Colonic mucosa (tissue), 4 donors: ENCODE measurements at regions of chr3 and their contacts with region 1.

Region 1: DNA sequence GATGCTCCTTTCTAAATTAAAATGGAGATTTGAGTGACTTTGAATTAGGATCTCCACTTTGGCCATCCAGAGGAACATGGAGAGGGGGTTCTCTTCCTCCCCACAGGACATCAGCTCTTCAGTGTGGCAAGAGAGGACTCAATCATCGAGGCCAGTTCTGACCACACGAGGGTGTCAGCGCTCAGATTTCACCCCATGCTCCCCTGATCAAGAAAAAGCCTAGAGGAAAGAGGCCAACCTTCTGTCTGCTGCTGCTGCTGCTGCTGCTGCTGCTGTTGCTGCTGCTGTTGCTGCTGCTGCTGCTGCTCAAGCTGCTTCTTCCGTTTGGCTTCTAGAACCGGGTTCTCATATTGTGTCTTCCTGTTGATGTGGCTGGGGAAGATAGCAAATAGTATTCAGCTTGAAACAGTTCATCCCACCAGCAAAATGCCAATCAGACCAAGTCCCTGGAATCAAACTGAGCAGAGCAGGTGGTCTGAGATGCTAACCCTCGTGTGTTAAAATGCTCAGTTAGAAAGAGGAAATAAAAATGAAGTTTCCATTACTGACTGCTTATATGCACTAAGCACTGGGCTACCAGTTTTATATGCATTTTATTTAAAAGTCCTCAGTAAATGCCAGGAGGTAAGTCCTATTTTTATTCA is 599.0 kb downstream of the MAGI1 start:
- DNase-seq: peak; percentile 36
- H3K4me3 ChIP-seq: no peak overlapping the region
- H3K27ac ChIP-seq: no peak overlapping the region
- H3K4me1 ChIP-seq: no peaks in the 10 kb centered on the region
- H3K27me3 ChIP-seq: no peaks in the 10 kb centered on the region
- CTCF ChIP-seq: no peak

Region 2: DNA sequence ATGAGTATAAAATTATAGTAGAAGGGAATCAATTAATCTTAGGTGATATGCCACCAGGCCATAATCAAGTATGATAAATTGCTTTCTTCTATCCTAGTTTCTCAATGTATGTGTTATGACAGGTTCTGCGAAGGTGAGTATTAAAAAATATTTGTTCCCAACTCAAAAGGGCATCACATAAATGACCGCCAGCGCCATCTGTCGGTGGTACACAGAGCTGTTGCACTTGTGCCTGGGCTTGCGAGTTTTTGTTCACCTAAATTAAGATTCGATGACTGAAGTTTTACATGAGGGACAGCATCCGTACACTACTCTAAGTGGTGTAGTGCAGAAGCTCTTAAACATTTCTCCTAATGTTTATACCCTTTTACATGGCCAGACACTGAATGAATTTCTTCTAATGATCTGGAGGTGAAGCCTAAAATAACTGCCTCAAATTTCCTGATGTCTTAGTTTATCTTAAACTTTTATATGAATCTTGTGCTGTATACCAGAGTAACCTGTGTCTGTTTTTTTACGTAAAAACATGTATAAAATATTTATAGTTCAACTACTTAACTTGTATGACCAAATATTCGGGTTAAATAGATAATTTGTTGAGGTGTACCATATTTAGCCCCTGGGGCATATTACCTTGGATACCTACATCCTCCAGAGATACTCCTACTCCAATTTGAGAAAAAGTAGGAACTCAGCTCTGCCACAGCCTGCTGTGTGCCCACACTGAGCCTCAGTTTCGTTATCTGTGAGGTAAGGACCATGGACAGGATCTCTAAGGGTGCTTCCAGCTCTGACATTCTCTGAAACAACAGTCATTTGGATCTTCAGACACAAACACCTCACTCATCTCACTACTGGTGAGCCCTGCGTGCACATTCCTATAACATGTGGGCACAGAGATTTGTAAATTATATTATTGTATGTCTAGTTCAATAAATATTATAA is 233.4 kb after region 1 on chr3:
- intact Hi-C with region 1: loop called (anchors 5 kb)
- DNase-seq: peak; percentile 51
- H3K4me3 ChIP-seq: no peak overlapping the region
- H3K27ac ChIP-seq: no peak overlapping the region
- H3K4me1 ChIP-seq: no peaks in the 10 kb centered on the region
- H3K27me3 ChIP-seq: no peaks in the 10 kb centered on the region
- CTCF ChIP-seq: peak; percentile 71

Region 3: DNA sequence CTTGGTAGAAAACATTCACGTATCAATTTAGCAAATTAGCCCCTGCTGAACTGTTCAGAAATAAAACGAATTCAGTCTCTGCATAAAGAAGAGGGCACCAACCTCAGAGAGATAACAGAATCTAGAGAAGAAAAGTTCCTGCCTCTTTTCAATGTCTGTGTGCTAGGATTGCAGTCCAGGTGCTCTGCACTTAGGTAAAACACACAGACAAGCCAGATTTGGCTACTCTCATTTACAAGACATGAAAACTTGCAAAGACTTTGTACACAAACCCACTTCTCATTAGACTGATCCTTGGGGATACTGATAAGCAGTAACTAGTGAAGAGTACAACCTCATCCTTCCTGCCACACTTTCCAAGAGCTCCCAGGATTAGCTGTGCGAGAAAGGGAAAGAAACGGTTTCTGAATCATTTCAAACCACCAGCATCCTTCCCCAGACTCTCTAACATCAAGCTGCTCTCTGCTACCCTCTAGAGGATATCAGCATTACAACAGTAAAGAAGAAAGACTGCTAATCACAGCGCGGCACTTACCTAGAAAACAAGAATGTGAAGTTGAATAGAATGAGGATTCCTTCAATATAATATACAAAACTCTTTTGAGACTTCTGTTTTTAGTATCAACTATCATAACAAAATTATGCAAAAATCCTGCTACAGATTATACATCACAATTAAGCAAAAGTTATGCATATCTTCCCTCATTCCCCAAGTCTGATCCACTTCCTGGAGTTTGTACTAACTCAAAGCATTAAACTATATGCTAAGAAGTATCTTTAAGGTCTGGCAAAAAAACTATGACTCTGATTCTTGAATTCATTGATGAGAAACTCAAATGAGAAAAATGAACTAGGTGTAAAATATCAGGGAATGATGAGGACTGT is 292.5 kb after region 1 on chr3:
- intact Hi-C with region 1: loop called (anchors 10 kb)
- DNase-seq: peak; percentile 30
- H3K4me3 ChIP-seq: no peak overlapping the region
- H3K27ac ChIP-seq: no peak overlapping the region
- H3K4me1 ChIP-seq: no peaks in the 10 kb centered on the region
- H3K27me3 ChIP-seq: no peaks in the 10 kb centered on the region
- CTCF ChIP-seq: peak; percentile 62

Region 4: DNA sequence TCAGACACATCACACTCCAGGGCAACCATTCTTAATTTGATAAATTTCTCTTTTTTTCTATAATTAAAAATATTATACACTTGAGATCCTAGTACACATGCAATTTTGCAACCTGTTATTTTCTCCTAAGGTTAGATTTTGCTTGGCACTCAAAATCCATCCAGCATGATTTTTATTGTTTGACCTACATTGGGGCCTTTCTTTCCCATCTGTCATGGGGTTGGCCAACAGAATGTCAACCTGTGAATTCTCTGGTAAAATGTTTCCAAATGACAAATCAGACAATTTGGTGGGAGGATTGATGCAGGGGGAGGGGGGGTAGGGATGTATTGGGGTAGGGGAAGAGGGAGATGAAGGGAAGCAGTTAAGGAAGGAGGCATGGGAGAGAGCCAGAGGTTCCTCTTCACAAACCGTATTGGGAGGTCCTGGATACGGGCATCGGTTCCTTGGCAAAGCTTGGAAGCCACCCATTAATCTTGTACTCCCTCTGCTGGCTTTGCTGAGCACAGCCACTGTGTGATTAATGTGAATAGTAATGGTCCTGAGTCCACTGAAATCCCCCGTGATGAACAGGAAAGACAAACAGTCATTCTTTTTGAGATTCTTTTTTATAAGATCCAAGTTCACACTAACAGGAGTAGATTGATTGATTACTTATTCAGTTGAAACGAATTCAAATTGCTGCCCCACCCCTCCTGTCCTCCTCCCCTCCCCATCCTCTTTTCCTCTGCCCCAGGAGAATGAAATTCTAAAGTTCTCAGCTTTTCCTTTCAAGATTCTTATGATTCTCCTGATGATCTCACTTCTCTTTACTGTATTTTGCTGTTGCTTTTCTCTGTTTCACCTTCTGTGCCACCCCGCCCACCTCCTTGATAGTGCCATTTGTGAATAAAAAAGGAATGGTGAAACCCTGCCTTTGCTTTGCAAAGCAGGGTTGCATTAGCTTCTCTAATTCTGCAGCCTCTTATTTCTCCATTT is 698.9 kb after region 1 on chr3:
- intact Hi-C with region 1: loop called (anchors 10 kb)
- DNase-seq: peak; percentile 53
- H3K4me3 ChIP-seq: no peak overlapping the region
- H3K27ac ChIP-seq: no peak overlapping the region
- H3K4me1 ChIP-seq: no peaks in the 10 kb centered on the region
- H3K27me3 ChIP-seq: no peaks in the 10 kb centered on the region
- CTCF ChIP-seq: peak; percentile 56